Activated CD4-positive, alpha-beta memory T cell treated with anti-CD3 and anti-CD28 coated beads, Interleukin-2, amount 10 ng/mL, durations not matched to agents 7 days and 5 days (primary cell): ENCODE measurements at regions of chr16 and their contacts with region 1.

Region 1: GRCh38 chr16:3443108-3444031 is at the starts of genes NAA60 and ZNF597:
- DNase-seq: peak; percentile 80
- H3K4me3 Mint-ChIP-seq: peak within 1 kb of the TSS; percentile 83
- H3K27ac Mint-ChIP-seq: peak within 1 kb of the TSS; percentile 87
- H3K4me1 Mint-ChIP-seq: peaks cover 19% of the 10 kb centered on the region
- H3K27me3 Mint-ChIP-seq: no peaks in the 10 kb centered on the region
- total RNA-seq, gene NAA60: 46.1 to 46.4 TPM
- total RNA-seq, gene ZNF597: 2.1 to 2.2 TPM

Region 2: GRCh38 chr16:3457434-3458252 is 14.3 kb after region 1 on chr16:
- CTCF ChIA-PET with region 1: interaction called, 6 read pairs
- POLR2A ChIA-PET with region 1: interaction called, 36 read pairs
- DNase-seq: peak; percentile 90
- H3K4me3 Mint-ChIP-seq: peak overlapping the region; percentile 74
- H3K27ac Mint-ChIP-seq: peak overlapping the region; percentile 70
- H3K4me1 Mint-ChIP-seq: peaks cover 47% of the 10 kb centered on the region
- H3K27me3 Mint-ChIP-seq: no peaks in the 10 kb centered on the region

Region 3: DNA sequence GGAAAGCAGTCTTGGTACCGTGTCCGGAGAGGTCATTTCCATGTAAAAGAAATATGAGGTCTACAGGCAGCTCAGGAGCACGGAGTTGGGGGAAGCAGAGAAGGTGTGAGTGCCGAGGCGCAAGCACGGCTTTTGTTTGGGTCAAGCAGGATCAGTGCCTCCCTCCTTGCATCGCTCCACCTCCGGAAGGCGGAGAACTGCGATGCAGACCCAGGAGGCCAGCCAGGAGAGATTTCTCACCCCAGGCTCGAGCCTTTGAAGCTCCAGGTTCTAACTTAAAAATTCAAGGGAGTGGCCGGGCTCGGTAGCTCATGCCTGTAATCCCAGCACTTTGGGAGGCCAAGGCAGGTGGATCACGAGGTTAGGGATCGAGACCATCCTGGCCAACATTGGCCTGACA is 25.1 kb after region 1 on chr16:
- CTCF ChIA-PET with region 1: no interaction called
- POLR2A ChIA-PET with region 1: no interaction called
- DNase-seq: no peak
- H3K4me3 Mint-ChIP-seq: no peak overlapping the region
- H3K27ac Mint-ChIP-seq: no peak overlapping the region
- H3K4me1 Mint-ChIP-seq: peaks cover 35% of the 10 kb centered on the region
- H3K27me3 Mint-ChIP-seq: no peaks in the 10 kb centered on the region

Region 4: GRCh38 chr16:4271176-4272066 is 828.1 kb after region 1 on chr16:
- CTCF ChIA-PET with region 1: no interaction called
- POLR2A ChIA-PET with region 1: no interaction called
- DNase-seq: peak; percentile 93
- H3K4me3 Mint-ChIP-seq: peak overlapping the region; percentile 81
- H3K27ac Mint-ChIP-seq: peak overlapping the region; percentile 89
- H3K4me1 Mint-ChIP-seq: peaks cover 22% of the 10 kb centered on the region
- H3K27me3 Mint-ChIP-seq: peaks cover 3% of the 10 kb centered on the region